Activated T-helper 1 cell treated with anti-CD3 and anti-CD28 coated beads, Interleukin-12 subunit alpha, Interleukin-12 subunit beta, Interleukin-2, Interleukin-4 antibody, amounts not matched to agents 30 ng/mL and 10 ng/mL and 1 ng/mL, durations not matched to agents 14 hours and 24 hours and 36 hours (primary cell): ENCODE measurements at regions of chr14 and their contacts with region 1.

Region 1: DNA sequence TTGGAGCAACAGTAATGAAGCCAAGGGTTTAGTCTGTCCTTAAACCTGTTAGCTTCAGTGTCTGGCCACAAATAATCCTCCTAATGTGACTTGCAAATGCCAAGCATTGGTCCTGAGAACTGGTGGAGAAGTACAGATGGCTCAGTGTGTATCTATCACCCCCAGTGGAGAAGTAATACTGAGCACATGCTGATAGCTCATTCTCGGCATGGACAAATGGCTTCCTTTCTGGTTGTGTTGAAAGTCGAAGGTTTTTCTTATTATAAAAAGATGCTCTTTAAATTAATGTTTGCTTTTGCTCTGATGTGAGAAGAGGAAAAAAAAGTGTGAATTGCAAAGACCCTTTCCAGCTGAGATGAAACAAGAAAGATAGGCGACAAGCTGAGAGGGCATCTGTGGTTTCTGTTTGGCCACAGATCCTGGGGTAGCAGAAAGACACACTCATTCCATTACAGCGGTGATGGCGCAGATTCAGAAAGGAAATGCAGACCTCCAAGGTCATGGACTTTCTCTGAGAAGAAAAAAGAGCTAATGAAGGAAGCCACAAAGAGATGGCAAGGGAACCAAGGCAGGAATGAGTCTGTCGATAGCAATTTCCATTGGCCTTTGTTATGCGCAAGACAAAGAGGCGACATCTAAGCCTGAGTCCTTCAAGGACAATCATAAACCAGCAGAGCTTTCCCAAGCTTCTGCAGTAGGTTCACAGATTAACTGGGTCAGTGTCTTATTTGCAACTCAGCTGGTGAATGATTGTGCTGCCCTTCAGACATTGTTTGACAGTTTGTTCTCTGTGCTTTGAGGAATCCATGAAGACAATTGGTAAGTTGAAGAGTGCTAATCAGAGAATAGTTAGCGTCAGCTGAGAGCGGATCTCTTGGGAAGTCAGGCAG is 155.5 kb upstream of the RGS6 start:
- DNase-seq: no peak
- H3K4me3 Mint-ChIP-seq: no peak overlapping the region
- H3K27ac Mint-ChIP-seq: peak overlapping the region; percentile 26
- H3K4me1 Mint-ChIP-seq: peaks cover 15% of the 10 kb centered on the region
- H3K27me3 Mint-ChIP-seq: peaks cover 4% of the 10 kb centered on the region

Region 2: DNA sequence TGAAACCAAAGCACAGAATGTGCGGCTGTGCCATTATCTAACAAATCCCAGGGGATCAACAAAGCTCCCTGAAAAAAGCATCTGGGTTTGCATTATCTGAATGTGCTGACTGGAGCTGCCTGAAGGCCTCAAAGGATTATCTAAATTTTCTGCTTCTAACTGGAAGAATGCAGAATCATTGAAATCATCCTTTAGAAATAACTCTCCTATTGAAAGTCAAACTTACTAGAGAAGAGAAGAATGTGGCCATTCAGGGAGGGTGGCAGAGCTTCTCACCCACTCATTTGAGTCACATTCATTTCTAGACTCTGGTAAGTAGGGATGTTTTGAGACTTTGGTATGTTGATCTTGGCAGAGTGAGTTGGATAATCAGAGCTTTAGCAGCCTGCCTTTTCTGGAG is 65.1 kb before region 1 on chr14:
- intact Hi-C with region 1: loop called (anchors 2 kb)
- DNase-seq: no peak
- H3K4me3 Mint-ChIP-seq: no peak overlapping the region
- H3K27ac Mint-ChIP-seq: no peak overlapping the region
- H3K4me1 Mint-ChIP-seq: peaks cover 28% of the 10 kb centered on the region
- H3K27me3 Mint-ChIP-seq: no peaks in the 10 kb centered on the region

Region 3: DNA sequence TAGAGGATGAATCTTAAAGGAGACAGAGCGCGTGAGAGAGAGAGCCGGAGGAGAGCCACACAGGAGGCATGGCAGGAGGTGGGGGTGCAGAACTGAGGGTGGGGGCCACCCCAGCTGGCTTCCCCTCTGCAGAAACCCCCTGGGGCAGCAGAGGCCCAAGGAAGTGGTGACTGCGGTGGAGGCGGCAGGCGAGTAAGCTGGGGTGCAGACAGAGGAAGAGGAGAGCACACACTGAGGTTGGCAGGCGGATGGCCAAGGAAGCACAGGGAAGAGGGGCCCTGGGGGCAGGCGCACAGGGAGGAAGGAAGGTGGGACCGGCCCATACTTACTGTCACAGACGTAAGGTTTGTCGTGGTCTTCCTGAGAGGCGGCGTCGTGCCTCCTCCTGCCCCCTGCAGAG is 937.4 kb after region 1 on chr14:
- intact Hi-C with region 1: no loop called
- DNase-seq: peak; percentile 55
- H3K4me3 Mint-ChIP-seq: peak overlapping the region; percentile 40
- H3K27ac Mint-ChIP-seq: peak overlapping the region; percentile 36
- H3K4me1 Mint-ChIP-seq: peaks cover 37% of the 10 kb centered on the region
- H3K27me3 Mint-ChIP-seq: no peaks in the 10 kb centered on the region